Activated B cell treated with CpG ODN at 0.5 μM for 24 hours (primary cell): ENCODE measurements at regions of chr3 and their contacts with region 1.

Region 1: GRCh38 chr3:10273702-10274305 is 18.9 kb downstream of the GHRL start:
- DNase-seq: no peak
- ATAC-seq: no peak
- H3K4me3 Mint-ChIP-seq: peak overlapping the region; percentile 32
- H3K27ac Mint-ChIP-seq: no peak overlapping the region
- H3K4me1 Mint-ChIP-seq: peaks cover 27% of the 10 kb centered on the region
- H3K27me3 Mint-ChIP-seq: no peaks in the 10 kb centered on the region
- CTCF ChIP-seq: no peak

Region 2: GRCh38 chr3:10047876-10048275 is 225.9 kb before region 1 on chr3:
- CTCF ChIA-PET with region 1: no interaction called
- POLR2A ChIA-PET with region 1: interaction called, 10 read pairs
- intact Hi-C with region 1: no loop called
- DNase-seq: no peak
- ATAC-seq: no peak
- H3K4me3 Mint-ChIP-seq: no peak overlapping the region
- H3K27ac Mint-ChIP-seq: no peak overlapping the region
- H3K4me1 Mint-ChIP-seq: no peaks in the 10 kb centered on the region
- H3K27me3 Mint-ChIP-seq: no peaks in the 10 kb centered on the region
- CTCF ChIP-seq: no peak